ENCODE measurements at regions of chr7 and their contacts with region 1.

Region 1: DNA sequence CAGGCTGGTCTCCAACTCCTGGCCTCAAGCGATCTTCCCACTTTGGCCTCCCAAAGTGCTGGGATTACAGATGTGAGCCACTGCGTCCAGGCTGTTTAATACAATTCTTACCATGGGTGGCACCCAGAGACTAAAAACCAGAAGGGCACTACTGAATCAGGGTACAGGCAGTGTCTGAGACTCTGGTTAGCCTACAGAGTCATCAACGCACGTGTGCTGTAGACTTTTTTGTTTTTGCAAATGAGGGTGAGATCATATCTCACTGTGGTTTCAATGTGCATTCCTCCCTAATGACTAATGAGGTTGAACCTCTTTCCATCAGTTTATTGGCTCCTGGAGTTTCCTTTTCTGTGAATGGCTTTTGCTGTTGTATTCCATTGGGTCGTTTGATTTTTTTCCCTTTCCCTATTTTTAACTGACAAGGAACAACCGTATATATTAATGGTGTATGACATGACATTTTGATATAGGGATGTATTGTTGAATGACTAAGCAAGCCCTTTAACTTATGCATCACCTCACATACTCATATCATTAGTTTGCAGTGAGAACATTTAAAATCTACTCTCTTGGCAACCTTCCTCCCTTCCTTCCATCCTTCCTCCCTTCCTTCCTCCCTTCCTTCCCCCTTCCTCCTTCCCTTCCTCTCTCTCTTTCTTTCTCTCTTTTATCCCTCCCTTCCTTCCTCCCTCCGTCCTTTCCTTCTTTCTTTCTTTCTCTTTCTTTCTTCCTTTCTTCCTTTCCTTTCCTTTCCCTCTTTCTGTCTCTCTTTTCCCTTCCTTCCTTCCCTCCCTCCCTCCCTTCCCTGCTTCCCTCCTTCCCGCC is 9.3 kb upstream of the METTL27 start:
- DNase-seq: peak in 3 of 9 experiments; percentile 24 to 34 (median 27)
- ATAC-seq: peak; percentile 65
- H3K4me3 ChIP-seq: no peak overlapping the region
- H3K4me3 Mint-ChIP-seq: no peak overlapping the region
- H3K27ac ChIP-seq: no peak overlapping the region
- H3K27ac Mint-ChIP-seq: no peak overlapping the region
- H3K4me1 ChIP-seq: no peaks in the 10 kb centered on the region
- H3K4me1 Mint-ChIP-seq: peaks cover 8% of the 10 kb centered on the region
- H3K27me3 ChIP-seq: peaks cover 0 to 3% of the 10 kb centered on the region in 2 experiments
- H3K27me3 Mint-ChIP-seq: peaks cover 16% of the 10 kb centered on the region
- CTCF ChIP-seq: no peak

Region 2: DNA sequence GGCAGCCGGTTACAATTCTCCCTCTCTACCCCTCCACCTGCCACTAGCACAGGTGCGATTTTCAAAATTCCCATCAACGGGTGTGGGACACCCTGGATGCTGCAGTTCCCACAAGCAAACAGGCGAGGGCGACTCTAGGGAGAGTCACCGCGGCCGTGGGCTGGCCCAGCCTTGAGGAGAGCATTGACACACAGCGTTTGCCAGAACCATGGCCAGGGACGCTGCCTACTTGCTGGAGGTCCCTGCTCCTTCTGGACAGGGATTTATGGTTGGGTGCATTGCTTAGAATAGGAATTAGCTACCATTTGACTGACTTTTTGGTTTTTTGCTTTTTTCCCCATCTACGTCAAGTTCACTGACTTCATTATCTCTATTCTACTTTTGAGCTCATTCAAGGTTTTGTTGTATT is 39.9 kb before region 1 on chr7:
- CTCF ChIA-PET with region 1: interaction called, 86 read pairs
- POLR2A ChIA-PET with region 1: no interaction called
- intact Hi-C with region 1: loop called in 1 of 2 experiments (anchors 1 kb)
- DNase-seq: peak; percentile 14 to 64 (median 52)
- ATAC-seq: peak; percentile 84
- H3K4me3 ChIP-seq: no peak overlapping the region
- H3K4me3 Mint-ChIP-seq: no peak overlapping the region
- H3K27ac ChIP-seq: no peak overlapping the region
- H3K27ac Mint-ChIP-seq: no peak overlapping the region
- H3K4me1 ChIP-seq: no peaks in the 10 kb centered on the region
- H3K4me1 Mint-ChIP-seq: no peaks in the 10 kb centered on the region
- H3K27me3 ChIP-seq: peaks cover 0 to 4% of the 10 kb centered on the region in 2 experiments
- H3K27me3 Mint-ChIP-seq: peaks cover 21% of the 10 kb centered on the region
- CTCF ChIP-seq: peak; percentile 57

Region 3: DNA sequence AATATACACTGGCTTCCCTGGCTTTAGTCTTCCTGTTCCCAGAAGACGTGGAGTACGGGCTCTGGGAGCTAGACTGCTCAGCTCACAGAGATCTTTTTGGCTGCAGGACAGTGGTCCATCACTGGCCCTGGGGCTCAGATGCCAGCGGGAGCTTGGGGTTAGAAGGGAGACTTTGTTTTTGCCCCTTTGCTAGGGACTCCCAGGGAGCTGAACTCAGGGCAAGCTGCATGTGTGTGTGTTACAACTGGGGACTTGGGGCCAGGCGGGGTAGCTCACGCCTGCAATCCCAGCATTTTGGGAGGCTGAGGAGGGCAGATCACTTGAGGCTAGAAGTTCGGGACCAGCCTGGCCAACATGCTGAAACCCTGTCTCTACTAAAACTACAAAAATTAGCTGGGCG is 25.6 kb before region 1 on chr7:
- CTCF ChIA-PET with region 1: interaction called, 9 read pairs
- POLR2A ChIA-PET with region 1: no interaction called
- intact Hi-C with region 1: loop called in 1 of 2 experiments (anchors 1 kb)
- DNase-seq: no peak
- ATAC-seq: no peak
- H3K4me3 ChIP-seq: no peak overlapping the region
- H3K4me3 Mint-ChIP-seq: no peak overlapping the region
- H3K27ac ChIP-seq: no peak overlapping the region
- H3K27ac Mint-ChIP-seq: no peak overlapping the region
- H3K4me1 ChIP-seq: peaks cover 18% of the 10 kb centered on the region
- H3K4me1 Mint-ChIP-seq: peaks cover 25% of the 10 kb centered on the region
- H3K27me3 ChIP-seq: no peaks in the 10 kb centered on the region
- H3K27me3 Mint-ChIP-seq: peaks cover 17% of the 10 kb centered on the region
- CTCF ChIP-seq: no peak

Region 4: DNA sequence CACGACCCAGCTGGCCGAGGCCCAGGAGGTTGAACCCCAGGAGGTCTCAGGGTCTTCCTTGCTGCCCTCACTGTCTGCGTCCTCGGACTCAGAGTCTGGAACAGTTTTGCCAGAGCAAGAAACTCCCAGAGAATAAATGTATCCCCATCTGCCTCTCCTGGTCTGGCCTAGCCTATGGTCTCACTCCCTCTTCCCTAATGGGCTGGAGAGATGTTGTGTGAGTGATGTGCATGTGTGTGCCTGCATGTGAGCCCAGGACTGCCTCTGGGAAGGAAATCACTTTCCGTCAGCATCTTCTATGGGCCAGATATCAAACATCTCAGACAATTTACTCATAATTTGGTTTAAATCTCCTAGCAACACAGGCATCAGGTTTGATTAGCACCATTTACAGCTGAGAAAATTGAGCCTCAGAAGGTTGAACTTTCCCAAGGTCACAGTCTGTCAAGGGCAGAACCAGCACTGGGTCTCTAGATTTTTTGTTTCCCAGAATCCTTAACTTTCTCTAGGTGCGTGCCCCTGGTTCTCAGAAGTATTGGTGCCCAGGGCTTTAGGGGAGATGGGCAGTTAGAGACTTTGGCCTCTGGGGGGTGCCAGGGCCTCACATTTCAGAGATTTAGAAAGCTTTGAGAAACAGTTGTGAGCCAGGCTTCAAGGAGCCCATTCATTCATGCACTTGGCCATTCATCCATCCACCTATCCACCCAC is 14.3 kb after region 1 on chr7:
- CTCF ChIA-PET with region 1: interaction called, 12 read pairs
- POLR2A ChIA-PET with region 1: no interaction called
- intact Hi-C with region 1: no loop called
- DNase-seq: peak in 1 of 9 experiments; percentile 18
- ATAC-seq: no peak
- H3K4me3 ChIP-seq: no peak overlapping the region
- H3K4me3 Mint-ChIP-seq: no peak overlapping the region
- H3K27ac ChIP-seq: no peak overlapping the region
- H3K27ac Mint-ChIP-seq: no peak overlapping the region
- H3K4me1 ChIP-seq: no peaks in the 10 kb centered on the region
- H3K4me1 Mint-ChIP-seq: no peaks in the 10 kb centered on the region
- H3K27me3 ChIP-seq: no peaks in the 10 kb centered on the region
- H3K27me3 Mint-ChIP-seq: no peaks in the 10 kb centered on the region
- CTCF ChIP-seq: no peak

Region 5: DNA sequence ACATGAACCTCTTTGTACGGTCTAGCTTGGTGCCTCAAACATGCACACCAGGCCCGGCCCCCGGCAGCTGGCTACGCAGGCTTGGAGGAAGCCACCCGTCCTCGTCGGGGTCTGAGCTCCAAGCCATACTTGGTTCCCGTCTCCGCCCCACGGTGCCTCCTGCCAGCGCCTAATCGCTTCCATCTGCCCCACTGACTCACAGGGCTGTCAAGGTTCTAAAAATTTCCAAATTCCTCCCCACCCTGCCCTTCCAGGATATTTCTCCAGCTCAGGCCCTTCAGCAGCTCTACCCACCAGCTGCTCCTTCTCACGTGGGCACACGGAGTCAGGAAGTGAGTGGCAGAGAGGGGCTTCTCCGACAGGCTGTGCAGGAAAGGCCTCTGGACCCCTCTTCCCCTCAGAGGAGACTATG is 48.1 kb after region 1 on chr7:
- CTCF ChIA-PET with region 1: no interaction called
- POLR2A ChIA-PET with region 1: no interaction called
- intact Hi-C with region 1: no loop called
- DNase-seq: no peak
- ATAC-seq: no peak
- H3K4me3 ChIP-seq: no peak overlapping the region
- H3K4me3 Mint-ChIP-seq: no peak overlapping the region
- H3K27ac ChIP-seq: no peak overlapping the region
- H3K27ac Mint-ChIP-seq: no peak overlapping the region
- H3K4me1 ChIP-seq: no peaks in the 10 kb centered on the region
- H3K4me1 Mint-ChIP-seq: no peaks in the 10 kb centered on the region
- H3K27me3 ChIP-seq: no peaks in the 10 kb centered on the region
- H3K27me3 Mint-ChIP-seq: no peaks in the 10 kb centered on the region
- CTCF ChIP-seq: no peak

Region 6: GRCh38 chr7:74051629-74052410 is 200.2 kb after region 1 on chr7:
- CTCF ChIA-PET with region 1: no interaction called
- POLR2A ChIA-PET with region 1: no interaction called
- intact Hi-C with region 1: no loop called
- DNase-seq: no peak
- ATAC-seq: no peak
- H3K4me3 ChIP-seq: no peak overlapping the region
- H3K4me3 Mint-ChIP-seq: no peak overlapping the region
- H3K27ac ChIP-seq: no peak overlapping the region
- H3K27ac Mint-ChIP-seq: no peak overlapping the region
- H3K4me1 ChIP-seq: no peaks in the 10 kb centered on the region
- H3K4me1 Mint-ChIP-seq: no peaks in the 10 kb centered on the region
- H3K27me3 ChIP-seq: no peaks in the 10 kb centered on the region
- H3K27me3 Mint-ChIP-seq: peaks cover 7% of the 10 kb centered on the region
- CTCF ChIP-seq: no peak

Measured in CD8-positive, alpha-beta T cell (primary cell).